Naive thymus-derived CD4-positive, alpha-beta T cell (primary cell): ENCODE measurements at regions of chr11 and their contacts with region 1.

Region 1: GRCh38 chr11:6812390-6813005 is 13.0 kb upstream of the OR6A2 start:
- DNase-seq: peak in 8 of 9 donors; percentile 15 to 55 (median 41)
- ATAC-seq: peak; percentile 91
- H3K4me3 ChIP-seq: no peak overlapping the region
- H3K4me3 Mint-ChIP-seq: no peak overlapping the region
- H3K27ac ChIP-seq: no peak overlapping the region
- H3K27ac Mint-ChIP-seq: no peak overlapping the region
- H3K4me1 ChIP-seq: no peaks in the 10 kb centered on the region
- H3K4me1 Mint-ChIP-seq: peaks cover 0 to 2% (median 0%) of the 10 kb centered on the region in 7 donors
- H3K27me3 ChIP-seq: peaks cover 0 to 3% of the 10 kb centered on the region in 2 donors
- H3K27me3 Mint-ChIP-seq: peaks cover 25 to 61% (median 51%) of the 10 kb centered on the region in 5 donors

Region 2: GRCh38 chr11:7694235-7694634 is 881.7 kb after region 1 on chr11:
- CTCF ChIA-PET with region 1: interaction called, 3 read pairs
- POLR2A ChIA-PET with region 1: no interaction called
- intact Hi-C with region 1: loop called in 1 of 2 experiments (anchors 1 kb)
- DNase-seq: no peak
- ATAC-seq: no peak
- H3K4me3 ChIP-seq: no peak overlapping the region
- H3K4me3 Mint-ChIP-seq: no peak overlapping the region
- H3K27ac ChIP-seq: no peak overlapping the region
- H3K27ac Mint-ChIP-seq: no peak overlapping the region
- H3K4me1 ChIP-seq: no peaks in the 10 kb centered on the region
- H3K4me1 Mint-ChIP-seq: no peaks in the 10 kb centered on the region
- H3K27me3 ChIP-seq: peaks cover 6 to 11% of the 10 kb centered on the region in 2 donors
- H3K27me3 Mint-ChIP-seq: peaks cover 28 to 55% (median 32%) of the 10 kb centered on the region in 5 donors